Naive thymus-derived CD4-positive, alpha-beta T cell (primary cell): ENCODE measurements at regions of chr3 and their contacts with region 1.

Region 1: DNA sequence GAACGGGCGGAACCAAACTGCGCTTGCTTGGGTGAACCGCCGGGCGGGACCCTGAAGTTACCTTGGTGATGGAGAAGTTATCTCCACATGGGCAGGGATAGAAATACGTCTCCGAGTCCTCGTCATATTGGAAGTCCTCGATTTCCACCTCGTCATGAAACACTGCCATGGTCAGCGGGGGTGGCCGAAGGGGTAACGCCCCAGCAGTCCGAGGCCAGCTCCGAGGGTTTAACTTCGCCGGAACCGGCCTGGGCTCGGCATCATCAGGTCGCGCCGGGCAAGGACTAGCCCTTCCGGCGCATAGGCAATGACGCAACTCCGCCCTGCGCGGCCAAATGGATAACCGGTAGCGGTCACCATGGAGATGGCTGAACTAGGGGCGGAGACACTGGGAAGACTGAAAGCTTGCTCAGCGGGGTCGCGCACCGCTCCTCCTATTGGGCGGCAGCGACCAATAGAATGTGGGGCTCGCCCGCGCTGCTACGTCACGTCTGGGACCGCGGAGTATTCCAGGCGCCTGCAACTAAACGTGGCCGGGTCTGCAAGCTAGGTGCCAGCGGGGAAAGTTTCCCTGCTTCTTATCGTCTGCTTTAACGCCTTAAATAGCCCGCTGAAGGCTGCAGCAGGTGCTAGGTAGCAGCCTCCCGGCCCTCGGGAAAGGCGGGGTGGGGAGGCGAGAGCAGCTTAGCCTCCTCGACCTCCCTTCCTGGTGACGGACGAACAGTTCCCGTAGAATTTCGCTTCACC is at the starts of genes DPH3 and OXNAD1:
- DNase-seq: peak; percentile 97 to 99 (median 98)
- ATAC-seq: peak; percentile 96
- H3K4me3 ChIP-seq: peak within 1 kb of the TSS; percentile 85
- H3K4me3 Mint-ChIP-seq: peak within 1 kb of the TSS; percentile 85 to 100 (median 98)
- H3K27ac ChIP-seq: peak within 1 kb of the TSS; percentile 88
- H3K27ac Mint-ChIP-seq: peak within 1 kb of the TSS; percentile 96 to 100 (median 98)
- H3K4me1 ChIP-seq: peaks cover 13 to 28% of the 10 kb centered on the region in 2 donors
- H3K4me1 Mint-ChIP-seq: peaks cover 13 to 50% (median 43%) of the 10 kb centered on the region in 7 donors
- H3K27me3 ChIP-seq: no peaks in the 10 kb centered on the region
- H3K27me3 Mint-ChIP-seq: peaks cover 0 to 2% (median 0%) of the 10 kb centered on the region in 5 donors
- total RNA-seq, gene DPH3: 12.4 to 23.6 (median 15.7) TPM
- total RNA-seq, gene OXNAD1: 80.3 to 171 (median 152) TPM

Region 2: GRCh38 chr3:15098503-15099363 is 1166.1 kb before region 1 on chr3 and contains the start of gene RBSN:
- CTCF ChIA-PET with region 1: no interaction called
- POLR2A ChIA-PET with region 1: interaction called, 4 read pairs
- intact Hi-C with region 1: loop called in 1 of 2 experiments (anchors 10 kb)
- DNase-seq: peak; percentile 87 to 96 (median 94)
- ATAC-seq: peak; percentile 87
- H3K4me3 ChIP-seq: peak within 1 kb of the TSS; percentile 83
- H3K4me3 Mint-ChIP-seq: peak within 1 kb of the TSS; percentile 90 to 99 (median 96)
- H3K27ac ChIP-seq: peak within 1 kb of the TSS; percentile 96
- H3K27ac Mint-ChIP-seq: peak within 1 kb of the TSS; percentile 90 to 99 (median 98)
- H3K4me1 ChIP-seq: peaks cover 8 to 14% of the 10 kb centered on the region in 2 donors
- H3K4me1 Mint-ChIP-seq: peaks cover 21 to 42% (median 30%) of the 10 kb centered on the region in 7 donors
- H3K27me3 ChIP-seq: no peaks in the 10 kb centered on the region
- H3K27me3 Mint-ChIP-seq: peaks cover 0 to 9% (median 2%) of the 10 kb centered on the region in 5 donors
- total RNA-seq, gene RBSN: 20.5 to 54.4 (median 39.6) TPM

Region 3: GRCh38 chr3:15859507-15860013 is 405.3 kb before region 1 on chr3:
- CTCF ChIA-PET with region 1: no interaction called
- POLR2A ChIA-PET with region 1: no interaction called
- intact Hi-C with region 1: loop called (anchors 1 kb)
- DNase-seq: peak; percentile 57 to 86 (median 71)
- ATAC-seq: peak; percentile 91
- H3K4me3 ChIP-seq: peak overlapping the region; percentile 63
- H3K4me3 Mint-ChIP-seq: peak overlapping the region; percentile 85 to 99 (median 95)
- H3K27ac ChIP-seq: peak overlapping the region; percentile 77
- H3K27ac Mint-ChIP-seq: peak overlapping the region in 6 of 9 donors; percentile 76 to 98 (median 92)
- H3K4me1 ChIP-seq: peaks cover 12 to 14% of the 10 kb centered on the region in 2 donors
- H3K4me1 Mint-ChIP-seq: peaks cover 21 to 50% (median 43%) of the 10 kb centered on the region in 7 donors
- H3K27me3 ChIP-seq: no peaks in the 10 kb centered on the region
- H3K27me3 Mint-ChIP-seq: peaks cover 0 to 10% (median 0%) of the 10 kb centered on the region in 5 donors

Region 4: DNA sequence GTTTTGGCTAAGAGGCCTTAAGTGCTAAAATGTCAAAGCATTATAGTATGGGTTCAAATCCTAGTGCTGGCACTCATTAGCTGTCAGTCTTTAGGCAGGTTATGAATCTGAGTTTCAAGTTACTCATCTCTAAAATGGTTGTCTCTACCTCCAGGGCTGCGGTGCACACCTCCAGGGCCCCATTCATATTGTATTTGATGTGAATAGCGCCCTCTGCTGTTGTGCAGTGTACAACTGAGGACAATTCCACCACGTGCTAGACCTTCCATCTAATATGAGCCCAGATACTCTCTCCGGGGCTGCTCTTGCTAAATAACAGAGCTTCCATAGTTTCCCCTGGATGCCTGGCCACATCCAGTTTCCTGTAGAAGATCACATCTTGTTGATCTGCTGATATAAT is 54.4 kb after region 1 on chr3:
- CTCF ChIA-PET with region 1: interaction called, 32 read pairs
- POLR2A ChIA-PET with region 1: interaction called, 18 read pairs
- intact Hi-C with region 1: loop called (anchors 1 kb)
- DNase-seq: peak in 8 of 9 donors; percentile 66 to 81 (median 78)
- ATAC-seq: peak; percentile 93
- H3K4me3 ChIP-seq: no peak overlapping the region
- H3K4me3 Mint-ChIP-seq: peak overlapping the region; percentile 35 to 78 (median 60)
- H3K27ac ChIP-seq: peak overlapping the region; percentile 60
- H3K27ac Mint-ChIP-seq: peak overlapping the region; percentile 79 to 98 (median 91)
- H3K4me1 ChIP-seq: peaks cover 40 to 58% of the 10 kb centered on the region in 2 donors
- H3K4me1 Mint-ChIP-seq: peaks cover 44 to 89% (median 81%) of the 10 kb centered on the region in 7 donors
- H3K27me3 ChIP-seq: no peaks in the 10 kb centered on the region
- H3K27me3 Mint-ChIP-seq: no peaks in the 10 kb centered on the region

Region 5: DNA sequence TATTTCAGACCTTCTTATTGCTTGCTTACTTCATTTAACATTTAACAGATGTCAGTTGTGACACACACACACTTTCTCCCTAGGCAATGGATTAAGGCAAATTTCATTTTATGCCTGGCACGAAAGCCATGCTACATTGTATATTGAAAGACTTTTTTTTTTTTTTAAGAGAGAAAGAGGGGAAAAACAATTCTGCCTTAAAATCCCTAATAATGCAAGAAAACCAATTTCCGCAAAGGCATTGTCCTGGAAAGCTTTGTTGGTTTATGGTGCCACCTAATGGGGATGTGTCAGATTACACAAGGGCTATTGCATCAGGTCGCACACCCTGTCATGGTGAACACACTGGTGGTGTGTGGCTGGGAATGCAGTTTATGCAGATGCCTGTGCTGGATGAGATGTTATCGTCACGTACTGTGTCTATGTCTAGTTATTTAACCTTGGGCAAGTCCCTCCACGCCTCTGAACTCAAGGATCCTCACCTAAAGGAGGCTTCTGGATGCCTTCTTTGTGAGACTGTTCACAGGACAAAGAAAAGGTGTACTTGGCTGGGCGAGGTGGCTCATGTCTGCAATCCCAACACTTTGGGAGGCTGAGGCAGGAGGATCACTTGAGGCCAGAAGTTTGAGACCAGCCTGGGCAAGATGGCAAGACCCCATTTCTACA is 285.9 kb after region 1 on chr3:
- CTCF ChIA-PET with region 1: interaction called, 19 read pairs
- POLR2A ChIA-PET with region 1: interaction called, 10 read pairs
- intact Hi-C with region 1: loop called (anchors 1 kb)
- DNase-seq: peak; percentile 36 to 82 (median 76)
- ATAC-seq: peak; percentile 98
- H3K4me3 ChIP-seq: no peak overlapping the region
- H3K4me3 Mint-ChIP-seq: peak overlapping the region in 1 of 10 donors; percentile 10
- H3K27ac ChIP-seq: no peak overlapping the region
- H3K27ac Mint-ChIP-seq: peak overlapping the region in 5 of 9 donors; percentile 16 to 67 (median 36)
- H3K4me1 ChIP-seq: peaks cover 0 to 4% of the 10 kb centered on the region in 2 donors
- H3K4me1 Mint-ChIP-seq: peaks cover 6 to 15% (median 7%) of the 10 kb centered on the region in 7 donors
- H3K27me3 ChIP-seq: no peaks in the 10 kb centered on the region
- H3K27me3 Mint-ChIP-seq: peaks cover 0 to 11% (median 9%) of the 10 kb centered on the region in 5 donors

Region 6: DNA sequence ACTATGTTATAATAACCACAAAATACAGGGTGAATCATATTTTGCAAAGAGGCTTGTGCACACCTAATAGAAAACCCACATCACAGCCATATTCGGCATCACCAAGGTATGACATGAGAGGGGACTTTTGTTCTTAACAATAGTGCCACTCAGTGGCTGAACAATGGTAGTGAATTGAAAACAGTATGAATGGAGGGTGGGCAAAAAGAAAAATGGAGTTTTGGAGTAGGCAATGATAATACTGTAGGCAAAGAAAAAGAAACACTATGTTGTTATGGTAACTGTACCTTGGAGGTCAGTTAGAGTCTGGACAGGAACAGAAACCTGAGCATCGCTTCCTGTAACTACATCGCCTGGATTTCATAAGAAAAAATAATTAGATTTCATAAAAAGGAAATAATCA is 968.5 kb after region 1 on chr3:
- CTCF ChIA-PET with region 1: no interaction called
- POLR2A ChIA-PET with region 1: no interaction called
- intact Hi-C with region 1: loop called (anchors 2 to 5 kb)
- DNase-seq: peak in 8 of 9 donors; percentile 22 to 73 (median 58)
- ATAC-seq: peak; percentile 97
- H3K4me3 ChIP-seq: no peak overlapping the region
- H3K4me3 Mint-ChIP-seq: peak overlapping the region in 7 of 10 donors; percentile 2 to 56 (median 50)
- H3K27ac ChIP-seq: no peak overlapping the region
- H3K27ac Mint-ChIP-seq: peak overlapping the region in 5 of 9 donors; percentile 4 to 73 (median 31)
- H3K4me1 ChIP-seq: peaks cover 0 to 18% of the 10 kb centered on the region in 2 donors
- H3K4me1 Mint-ChIP-seq: peaks cover 5 to 30% (median 27%) of the 10 kb centered on the region in 7 donors
- H3K27me3 ChIP-seq: no peaks in the 10 kb centered on the region
- H3K27me3 Mint-ChIP-seq: no peaks in the 10 kb centered on the region